Right cardiac atrium (tissue), 5 donors: ENCODE measurements at regions of chr2 and their contacts with region 1.

Region 1: DNA sequence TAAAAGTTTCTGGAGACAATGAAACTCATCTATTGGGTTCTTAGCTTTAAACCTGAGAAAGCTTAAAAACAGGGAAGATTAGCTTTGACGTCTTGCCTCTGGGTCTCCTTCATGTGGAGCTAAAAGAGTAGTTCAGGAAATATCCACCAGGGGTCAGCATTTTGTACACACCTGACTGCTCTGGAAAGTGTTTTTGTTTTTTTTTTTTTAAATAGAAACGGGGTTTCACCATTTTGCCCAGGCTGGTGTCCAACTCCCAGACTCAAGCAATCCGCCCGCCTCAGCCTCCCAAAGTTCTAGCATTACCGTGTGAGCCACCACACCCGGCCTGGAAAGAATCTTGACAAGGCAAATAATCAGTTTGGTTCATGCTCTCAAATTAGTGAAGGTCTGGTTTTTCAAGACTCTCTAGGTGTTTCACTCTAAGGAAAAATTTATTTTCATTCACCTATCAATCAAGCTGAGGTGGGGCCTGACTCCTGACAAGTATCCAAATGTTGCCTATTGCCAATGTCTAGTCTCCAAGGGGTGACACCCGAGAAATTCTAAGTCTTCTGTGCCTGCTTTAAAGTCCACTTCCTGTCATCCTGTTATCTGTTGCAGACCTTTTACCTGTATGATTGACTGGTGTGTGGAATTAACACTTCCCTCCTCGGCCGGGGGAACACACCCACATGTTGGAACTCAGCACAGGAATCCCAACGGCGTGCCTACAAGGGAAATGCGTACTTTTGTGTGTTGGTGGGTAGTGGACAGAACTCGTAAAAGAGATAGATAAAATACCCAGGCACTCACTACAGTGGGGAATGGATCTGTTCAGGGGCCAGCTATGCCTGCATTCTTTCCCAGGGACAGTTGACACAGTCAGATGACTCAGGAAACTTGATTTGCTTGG is 11.3 kb downstream of the IL1RN start:
- DNase-seq: no peak
- ATAC-seq: peak; percentile 59 to 61
- H3K4me3 ChIP-seq: no peak overlapping the region
- H3K27ac ChIP-seq: no peak overlapping the region
- H3K4me1 ChIP-seq: peaks cover 4% of the 10 kb centered on the region
- H3K27me3 ChIP-seq: no peaks in the 10 kb centered on the region

Region 2: DNA sequence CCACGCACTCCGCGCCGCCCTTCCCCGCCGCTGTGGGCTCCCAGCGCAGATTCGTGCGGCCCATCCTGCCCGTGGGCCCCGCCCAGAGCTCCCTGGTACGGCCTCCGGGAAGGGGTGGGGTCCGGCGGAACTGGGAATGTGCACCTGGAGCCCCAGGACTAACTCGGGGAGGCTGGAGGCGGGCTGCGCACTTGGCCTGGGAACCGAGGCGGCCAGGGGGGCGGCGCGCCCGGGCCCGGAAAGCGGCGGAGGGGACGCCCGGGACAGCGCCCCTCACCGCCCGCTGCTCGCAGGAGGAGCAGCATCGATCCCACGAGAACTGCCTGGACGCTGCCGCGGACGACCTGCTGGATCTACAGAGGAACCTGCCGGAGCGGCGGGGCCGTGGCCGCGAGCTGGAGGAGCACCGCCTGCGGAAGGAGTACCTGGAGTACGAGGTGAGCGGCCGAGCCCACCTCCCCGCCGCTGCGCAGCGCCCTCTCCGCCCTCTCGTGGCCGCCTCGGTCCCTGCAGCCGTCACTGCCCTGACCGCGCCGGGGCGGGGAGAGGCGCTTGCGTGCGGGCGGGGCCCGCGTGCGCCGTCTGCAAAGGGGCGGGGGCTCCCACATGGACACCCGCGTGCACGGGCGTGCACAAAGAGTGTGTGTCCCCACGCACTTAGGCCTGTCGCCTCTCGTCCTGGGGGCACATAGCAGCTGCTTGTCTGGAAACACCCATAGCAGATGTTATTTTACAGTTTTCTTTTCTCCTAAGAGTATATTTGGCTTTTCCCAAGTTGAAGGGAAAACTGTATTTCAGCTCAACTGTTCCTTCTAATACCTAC is 60.3 kb after region 1 on chr2:
- intact Hi-C with region 1: loop called in 2 of 4 experiments (anchors 2 to 5 kb)
- DNase-seq: peak; percentile 86 to 95 (median 94)
- ATAC-seq: peak; percentile 95
- H3K4me3 ChIP-seq: peak overlapping the region; percentile 54
- H3K27ac ChIP-seq: no peak overlapping the region
- H3K4me1 ChIP-seq: no peaks in the 10 kb centered on the region
- H3K27me3 ChIP-seq: no peaks in the 10 kb centered on the region

Region 3: GRCh38 chr2:113370478-113371091 is 231.9 kb after region 1 on chr2:
- intact Hi-C with region 1: loop called in 3 of 4 experiments (anchors 5 to 10 kb)
- DNase-seq: peak; percentile 63 to 77 (median 74)
- ATAC-seq: peak; percentile 82 to 90
- H3K4me3 ChIP-seq: no peak overlapping the region
- H3K27ac ChIP-seq: no peak overlapping the region
- H3K4me1 ChIP-seq: peaks cover 1% of the 10 kb centered on the region
- H3K27me3 ChIP-seq: no peaks in the 10 kb centered on the region